Esophagus muscularis mucosa (tissue), 4 donors: ENCODE measurements at regions of chr7 and their contacts with region 1.

Region 1: DNA sequence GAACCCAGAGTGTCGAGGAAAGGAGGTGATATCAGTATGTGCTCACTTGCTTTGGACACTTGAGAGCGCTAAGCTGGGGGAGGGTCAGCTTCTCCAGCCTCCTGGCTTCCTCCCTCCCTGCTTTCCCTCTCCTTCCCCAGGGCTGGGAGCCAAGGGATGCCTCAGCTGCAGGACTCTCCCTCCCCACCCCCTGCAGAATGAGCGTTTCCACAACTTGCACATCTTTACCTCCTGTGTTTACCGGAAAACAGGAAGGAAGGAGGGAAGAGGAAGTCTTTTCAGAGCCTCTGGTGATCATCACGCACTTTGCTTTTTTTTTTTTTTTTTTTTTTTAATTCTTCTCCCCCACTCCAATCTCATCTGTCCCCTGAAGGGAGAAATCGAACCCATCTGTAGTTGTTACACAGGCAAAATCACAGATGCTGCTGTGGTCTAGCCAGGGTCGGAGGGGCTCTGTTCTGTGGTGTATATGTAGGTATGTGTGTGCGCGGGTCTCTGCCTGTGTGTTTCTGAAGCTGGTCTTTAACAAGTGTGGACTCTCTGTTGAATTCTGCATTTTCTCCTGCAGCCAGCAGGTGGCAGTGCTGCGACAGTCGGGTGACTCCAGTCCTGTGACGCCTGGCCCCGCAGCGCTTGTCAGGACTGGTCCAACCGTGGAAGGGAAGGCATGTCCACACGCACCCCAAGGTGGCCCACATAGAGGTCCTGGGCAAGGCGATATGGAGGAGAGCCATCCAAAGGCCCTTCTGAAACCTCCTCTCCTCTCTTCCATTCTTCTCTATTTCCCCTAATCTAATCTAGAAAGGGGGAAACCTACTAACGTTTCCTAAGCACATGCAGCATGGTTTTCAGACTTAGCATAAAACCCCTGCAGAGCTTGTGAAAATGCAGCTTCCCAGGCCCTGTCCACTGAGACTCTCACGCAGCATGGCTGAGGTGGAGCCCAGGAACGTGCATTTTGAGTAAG is 257.6 kb downstream of the PLXNA4 start:
- DNase-seq: no peak
- H3K4me3 ChIP-seq: peak overlapping the region in 2 of 4 donors; percentile 15 to 27
- H3K27ac ChIP-seq: no peak overlapping the region
- H3K4me1 ChIP-seq: peaks cover 10 to 19% (median 12%) of the 10 kb centered on the region in 4 donors
- H3K27me3 ChIP-seq: peaks cover 0 to 21% (median 0%) of the 10 kb centered on the region in 4 donors
- CTCF ChIP-seq: peak; percentile 87 to 94 (median 88)
- EP300 ChIP-seq: no peak
- POLR2A ChIP-seq: no peak

Region 2: DNA sequence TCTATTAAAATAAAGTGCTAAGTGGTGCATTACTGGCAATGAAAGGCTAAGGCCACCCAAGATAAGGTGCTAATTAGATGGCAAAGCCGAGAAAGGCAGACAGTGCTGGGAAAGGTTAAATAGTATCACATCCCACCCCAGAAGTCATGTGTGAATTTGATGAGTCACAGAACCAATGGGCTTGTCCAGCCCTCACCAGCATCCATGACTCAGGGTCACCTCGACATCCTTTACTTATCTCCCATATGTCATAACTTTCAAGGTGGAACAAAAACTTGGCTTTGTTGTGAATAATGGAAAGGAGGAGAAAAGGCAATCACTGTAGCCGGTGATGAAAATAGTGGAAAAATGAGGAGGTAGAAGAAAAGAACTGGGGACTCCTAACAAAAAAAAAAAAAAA is 201.4 kb before region 1 on chr7:
- intact Hi-C with region 1: no loop called
- DNase-seq: no peak
- H3K4me3 ChIP-seq: no peak overlapping the region
- H3K27ac ChIP-seq: no peak overlapping the region
- H3K4me1 ChIP-seq: no peaks in the 10 kb centered on the region
- H3K27me3 ChIP-seq: no peaks in the 10 kb centered on the region
- CTCF ChIP-seq: no peak
- EP300 ChIP-seq: no peak
- POLR2A ChIP-seq: no peak

Region 3: DNA sequence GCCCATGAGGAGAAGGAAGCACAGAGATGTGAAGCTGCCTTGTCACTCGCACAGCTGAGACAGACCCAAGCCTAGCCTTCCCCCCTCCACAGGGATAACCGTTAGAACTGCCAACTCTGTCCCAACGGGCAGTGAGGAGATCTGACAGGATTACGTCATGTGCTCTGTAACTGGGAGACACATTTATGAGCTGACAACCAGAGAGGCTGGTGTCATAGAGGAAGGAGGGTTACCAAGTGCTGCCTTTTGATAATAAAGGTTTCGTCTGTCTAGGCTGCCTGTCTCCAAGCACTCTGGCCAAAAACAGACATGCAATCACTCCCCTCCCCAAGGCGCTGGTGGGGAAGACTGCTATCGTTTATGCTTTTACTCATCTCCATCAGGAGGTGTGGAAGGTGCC is 91.8 kb after region 1 on chr7:
- intact Hi-C with region 1: no loop called
- DNase-seq: no peak
- H3K4me3 ChIP-seq: no peak overlapping the region
- H3K27ac ChIP-seq: peak overlapping the region in 2 of 4 donors; percentile 4
- H3K4me1 ChIP-seq: peaks cover 17 to 25% (median 20%) of the 10 kb centered on the region in 4 donors
- H3K27me3 ChIP-seq: no peaks in the 10 kb centered on the region
- CTCF ChIP-seq: no peak
- EP300 ChIP-seq: no peak
- POLR2A ChIP-seq: no peak

Region 4: DNA sequence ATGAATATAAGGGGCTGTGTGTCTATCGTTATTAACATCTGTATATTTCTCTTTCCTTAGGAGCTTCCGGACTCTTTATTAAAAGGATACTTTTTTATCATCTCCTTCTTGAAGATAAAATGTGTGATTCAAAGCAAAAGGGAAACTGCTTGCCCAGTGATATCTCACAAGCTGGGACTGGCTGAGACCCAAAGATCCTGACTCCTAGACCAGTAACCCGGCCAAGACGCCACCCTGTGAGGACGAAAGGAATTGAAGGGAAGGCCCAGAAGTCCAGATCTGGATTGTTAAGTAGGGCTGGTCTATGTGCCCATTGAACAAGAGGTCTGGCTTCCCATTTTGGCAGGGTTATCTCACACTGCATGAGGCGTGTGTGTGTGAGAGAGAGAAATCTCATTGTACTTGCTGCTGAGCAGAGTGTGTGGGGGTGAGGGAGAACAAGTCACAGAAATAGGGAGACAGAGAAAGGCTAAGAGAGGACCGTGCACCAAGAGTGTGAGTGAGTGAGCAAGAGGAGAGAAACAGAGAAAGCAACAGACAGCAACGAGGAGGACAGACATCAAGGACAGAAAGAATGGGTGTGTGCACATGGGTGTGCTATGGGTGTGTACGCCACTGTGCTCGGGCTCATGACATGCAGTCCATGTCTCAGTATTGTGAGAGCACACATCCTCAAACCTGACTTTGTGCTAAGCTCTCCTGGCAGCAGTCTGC is 182.2 kb after region 1 on chr7:
- intact Hi-C with region 1: loop called (anchors 5 kb)
- DNase-seq: no peak
- H3K4me3 ChIP-seq: no peak overlapping the region
- H3K27ac ChIP-seq: no peak overlapping the region
- H3K4me1 ChIP-seq: peaks cover 0 to 25% (median 11%) of the 10 kb centered on the region in 4 donors
- H3K27me3 ChIP-seq: no peaks in the 10 kb centered on the region
- CTCF ChIP-seq: peak; percentile 20 to 60 (median 22)
- EP300 ChIP-seq: no peak
- POLR2A ChIP-seq: no peak